ENCODE measurements at regions of chr7 and their contacts with region 1.

Region 1: DNA sequence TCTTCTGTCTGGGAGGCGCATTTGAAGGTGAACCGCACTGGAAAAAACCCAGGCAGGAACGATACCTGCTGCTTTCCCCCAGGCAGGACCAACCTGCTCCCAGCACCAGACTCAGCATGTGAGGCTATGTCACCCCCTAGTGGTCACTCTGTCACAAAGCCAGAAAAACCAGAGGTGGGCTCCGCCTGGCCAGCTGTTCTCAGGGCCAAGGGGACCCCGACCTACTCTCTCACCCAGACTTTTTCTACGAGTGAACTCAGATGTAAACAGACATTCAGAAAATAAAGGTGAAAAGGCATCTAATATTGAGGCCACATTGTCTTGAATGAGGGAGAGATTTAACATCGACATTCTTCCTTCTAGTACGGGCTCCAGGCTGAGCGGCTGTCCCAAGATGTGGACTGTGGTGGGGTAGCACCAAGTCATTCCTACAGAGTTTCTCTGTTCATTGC is 117.3 kb downstream of the PRKAG2 start:
- H3K4me3 ChIP-seq: no peak overlapping the region
- H3K27ac ChIP-seq: no peak overlapping the region
- H3K4me1 ChIP-seq: no peaks in the 10 kb centered on the region
- CTCF ChIP-seq: peak; percentile 83

Region 2: GRCh38 chr7:151493083-151493482 is 266.5 kb before region 1 on chr7:
- CTCF ChIA-PET with region 1: no interaction called
- POLR2A ChIA-PET with region 1: no interaction called
- H3K4me3 ChIP-seq: no peak overlapping the region
- H3K27ac ChIP-seq: no peak overlapping the region
- H3K4me1 ChIP-seq: peaks cover 15% of the 10 kb centered on the region
- CTCF ChIP-seq: no peak

Region 3: GRCh38 chr7:151570366-151570915 is 189.2 kb before region 1 on chr7:
- CTCF ChIA-PET with region 1: interaction called, 34 read pairs
- POLR2A ChIA-PET with region 1: no interaction called
- H3K4me3 ChIP-seq: no peak overlapping the region
- H3K27ac ChIP-seq: no peak overlapping the region
- H3K4me1 ChIP-seq: no peaks in the 10 kb centered on the region
- CTCF ChIP-seq: no peak

Region 4: GRCh38 chr7:151626422-151627115 is 133.0 kb before region 1 on chr7:
- CTCF ChIA-PET with region 1: interaction called, 10 read pairs
- POLR2A ChIA-PET with region 1: interaction called, 4 read pairs
- H3K4me3 ChIP-seq: no peak overlapping the region
- H3K27ac ChIP-seq: no peak overlapping the region
- H3K4me1 ChIP-seq: 0 out of 2 replicates have a peak, but pooled peaks cover 4% of the 10 kb centered on the region
- CTCF ChIP-seq: peak; percentile 33; the same call in 1 of the 2 replicates

Region 5: GRCh38 chr7:151696721-151697514 is 62.7 kb before region 1 on chr7:
- CTCF ChIA-PET with region 1: interaction called, 12 read pairs
- POLR2A ChIA-PET with region 1: no interaction called
- H3K4me3 ChIP-seq: no peak overlapping the region
- H3K27ac ChIP-seq: no peak overlapping the region
- H3K4me1 ChIP-seq: peaks cover 6% of the 10 kb centered on the region; the same call in 1 of the 2 replicates
- CTCF ChIP-seq: 0 out of 2 replicates have a peak, but pooled peaks have one; percentile 17

Region 6: GRCh38 chr7:151744656-151745638 is 14.7 kb before region 1 on chr7:
- CTCF ChIA-PET with region 1: interaction called, 19 read pairs
- POLR2A ChIA-PET with region 1: no interaction called
- H3K4me3 ChIP-seq: no peak overlapping the region
- H3K27ac ChIP-seq: no peak overlapping the region
- H3K4me1 ChIP-seq: no peaks in the 10 kb centered on the region
- CTCF ChIP-seq: no peak